ENCODE measurements at regions of chr3 and their contacts with region 1.

Region 1: DNA sequence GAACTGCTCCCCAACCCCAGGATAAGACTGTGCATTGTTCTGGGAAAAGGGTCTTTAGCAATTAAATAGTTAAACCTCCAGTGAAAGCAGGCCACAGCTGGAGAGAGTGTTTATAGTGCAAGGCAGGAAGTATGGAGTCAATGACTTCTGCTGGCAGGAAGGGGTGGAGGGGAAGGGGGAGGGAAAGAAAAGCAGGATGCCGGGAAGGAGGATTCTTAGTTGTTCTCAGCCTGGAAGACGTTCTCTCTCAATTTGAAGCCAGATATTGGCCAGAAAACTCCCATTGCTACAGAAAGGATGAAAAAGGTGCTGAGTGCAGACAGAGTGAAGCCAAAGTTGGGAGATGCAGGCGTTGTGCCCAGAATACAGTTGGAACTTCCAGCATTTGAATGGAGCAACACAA is 35.7 kb upstream of the ACTL6A start:
- DNase-seq: peak; percentile 94
- H3K4me3 ChIP-seq: peak overlapping the region in 2 of 3 experiments; percentile 18 to 40
- H3K27ac ChIP-seq: peak overlapping the region; percentile 78
- H3K4me1 ChIP-seq: peaks cover 18% of the 10 kb centered on the region
- H3K27me3 ChIP-seq: no peaks in the 10 kb centered on the region
- CTCF ChIP-seq: no peak
- POLR2A ChIP-seq: peak; percentile 31

Region 2: DNA sequence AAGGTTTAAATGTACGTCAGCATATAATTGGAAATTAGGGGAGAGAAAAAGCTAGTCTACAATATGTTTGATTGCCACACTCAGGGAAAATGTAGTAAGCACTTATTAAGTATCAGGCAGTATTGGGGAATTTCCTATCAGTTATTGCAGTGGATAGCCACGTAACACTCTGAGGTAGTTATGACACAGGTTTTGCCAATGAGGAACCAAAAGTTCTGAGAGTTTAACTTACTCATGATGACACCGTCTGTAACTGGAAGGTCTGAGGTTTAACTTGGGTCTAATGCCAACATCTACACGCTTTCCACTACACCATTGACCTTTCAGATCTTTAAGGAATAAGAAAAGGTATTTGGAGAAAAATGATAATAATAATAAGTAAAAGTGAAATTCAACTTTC is 544.9 kb before region 1 on chr3:
- CTCF ChIA-PET with region 1: no interaction called
- POLR2A ChIA-PET with region 1: no interaction called
- dilution Hi-C with region 1: no loop called
- intact Hi-C with region 1: no loop called
- DNase-seq: no peak
- H3K4me3 ChIP-seq: no peak overlapping the region
- H3K27ac ChIP-seq: no peak overlapping the region
- H3K4me1 ChIP-seq: no peaks in the 10 kb centered on the region
- H3K27me3 ChIP-seq: no peaks in the 10 kb centered on the region
- CTCF ChIP-seq: no peak
- POLR2A ChIP-seq: no peak

Region 3: DNA sequence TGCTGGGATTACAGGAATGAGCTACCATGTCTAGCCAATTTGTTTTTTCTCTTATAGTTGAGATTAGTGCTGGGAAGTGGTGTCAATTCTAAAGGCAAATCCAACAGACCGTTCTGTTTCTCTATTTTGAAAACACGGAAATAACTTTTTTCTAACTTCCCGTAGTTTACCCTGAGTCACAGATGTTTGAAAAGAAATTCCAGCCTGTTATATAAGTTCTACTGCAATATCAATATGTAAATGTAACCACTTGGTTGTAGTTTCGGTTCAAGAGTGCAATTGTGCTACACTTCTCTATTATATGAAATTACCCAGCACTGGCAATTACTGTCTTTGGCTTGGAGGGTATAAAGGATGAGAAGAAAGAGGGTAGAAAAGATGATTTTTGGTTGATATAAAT is 53.4 kb before region 1 on chr3:
- CTCF ChIA-PET with region 1: no interaction called
- POLR2A ChIA-PET with region 1: no interaction called
- dilution Hi-C with region 1: no loop called
- intact Hi-C with region 1: loop called (anchors 1 kb)
- DNase-seq: peak; percentile 86
- H3K4me3 ChIP-seq: peak overlapping the region in 1 of 3 experiments; percentile 26
- H3K27ac ChIP-seq: peak overlapping the region; percentile 68
- H3K4me1 ChIP-seq: peaks cover 7% of the 10 kb centered on the region
- H3K27me3 ChIP-seq: no peaks in the 10 kb centered on the region
- CTCF ChIP-seq: no peak
- POLR2A ChIP-seq: no peak

Region 4: DNA sequence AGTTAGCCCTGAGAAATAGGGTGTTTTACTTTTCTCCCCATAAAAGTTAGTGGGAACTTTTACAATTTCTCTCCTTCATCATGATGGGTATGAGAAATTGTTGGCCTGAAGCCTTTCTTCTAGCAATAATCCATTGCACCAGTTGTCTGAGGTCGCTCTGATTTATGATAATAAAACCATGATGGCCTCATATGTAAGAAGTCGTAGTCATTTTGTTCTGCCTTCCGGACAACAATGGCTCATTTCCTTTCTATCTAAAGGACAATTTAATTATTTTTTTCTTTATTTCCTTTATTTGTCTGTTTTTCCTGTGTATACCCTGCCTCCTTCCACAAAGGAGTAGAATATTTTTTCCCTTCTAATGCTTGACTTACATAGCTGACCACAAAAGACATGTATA is 44.1 kb before region 1 on chr3:
- CTCF ChIA-PET with region 1: no interaction called
- POLR2A ChIA-PET with region 1: no interaction called
- dilution Hi-C with region 1: no loop called
- intact Hi-C with region 1: loop called (anchors 1 kb)
- DNase-seq: peak; percentile 77
- H3K4me3 ChIP-seq: peak overlapping the region in 1 of 3 experiments; percentile 21
- H3K27ac ChIP-seq: peak overlapping the region; percentile 73
- H3K4me1 ChIP-seq: peaks cover 23% of the 10 kb centered on the region
- H3K27me3 ChIP-seq: no peaks in the 10 kb centered on the region
- CTCF ChIP-seq: no peak
- POLR2A ChIP-seq: no peak

Region 5: DNA sequence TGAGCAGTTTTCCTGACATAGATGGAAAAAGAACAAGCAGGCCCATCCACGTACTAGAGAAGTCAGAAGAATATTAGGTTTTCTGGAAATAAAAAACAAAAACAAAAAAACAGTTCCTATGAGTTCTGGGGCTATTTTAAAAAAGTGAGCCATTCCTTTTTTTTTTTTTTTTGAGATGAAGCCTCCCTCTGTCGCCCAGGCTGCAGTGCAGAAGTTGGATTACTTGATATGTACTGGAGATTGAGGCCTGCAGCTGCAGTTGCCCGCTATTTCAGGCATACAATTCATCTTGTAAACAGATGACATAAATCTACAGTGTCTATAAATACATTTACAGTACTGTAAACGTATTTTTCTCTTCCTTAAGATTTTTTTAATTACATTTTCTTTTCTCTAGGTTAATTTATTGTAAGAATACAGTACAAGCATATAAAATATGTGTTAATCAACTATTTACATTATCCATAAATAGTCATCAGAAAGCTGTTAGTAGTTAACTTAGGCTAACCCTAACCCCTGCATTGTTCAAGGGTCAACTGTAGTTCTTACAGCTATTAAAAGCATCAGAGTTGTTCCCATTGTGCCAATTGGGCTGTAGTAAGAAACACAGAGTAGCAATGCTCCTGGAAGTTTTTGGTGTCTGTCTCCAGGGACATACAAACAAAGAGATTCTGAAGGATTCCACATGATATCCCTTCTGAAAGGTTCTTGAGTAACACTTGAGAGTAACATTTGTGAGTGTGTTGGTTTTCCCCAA is 24.5 kb after region 1 on chr3:
- CTCF ChIA-PET with region 1: no interaction called
- POLR2A ChIA-PET with region 1: no interaction called
- dilution Hi-C with region 1: no loop called
- intact Hi-C with region 1: no loop called
- DNase-seq: peak; percentile 30
- H3K4me3 ChIP-seq: no peak overlapping the region
- H3K27ac ChIP-seq: no peak overlapping the region
- H3K4me1 ChIP-seq: no peaks in the 10 kb centered on the region
- H3K27me3 ChIP-seq: no peaks in the 10 kb centered on the region
- CTCF ChIP-seq: no peak
- POLR2A ChIP-seq: no peak

Region 6: DNA sequence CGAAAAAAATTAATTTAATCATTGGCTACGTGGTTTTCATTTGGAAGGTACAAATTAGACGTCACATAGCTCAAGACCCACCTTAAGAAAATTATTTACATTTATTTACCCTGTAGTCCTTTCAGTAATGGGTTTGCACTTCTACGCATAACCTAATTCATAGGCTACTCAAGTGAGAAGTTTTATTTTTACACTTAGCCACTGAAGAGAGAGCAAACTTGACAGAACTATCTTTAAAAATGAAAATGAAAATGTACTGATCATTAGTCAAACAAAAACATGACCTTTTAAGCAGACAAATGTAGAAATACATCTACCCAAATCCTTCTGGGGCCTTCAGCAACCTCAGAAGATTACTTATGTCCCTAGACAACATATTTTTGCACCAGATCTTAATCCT is 805.6 kb after region 1 on chr3:
- CTCF ChIA-PET with region 1: no interaction called
- POLR2A ChIA-PET with region 1: no interaction called
- dilution Hi-C with region 1: no loop called
- intact Hi-C with region 1: no loop called
- DNase-seq: no peak
- H3K4me3 ChIP-seq: no peak overlapping the region
- H3K27ac ChIP-seq: no peak overlapping the region
- H3K4me1 ChIP-seq: no peaks in the 10 kb centered on the region
- H3K27me3 ChIP-seq: no peaks in the 10 kb centered on the region
- CTCF ChIP-seq: no peak
- POLR2A ChIP-seq: no peak